Astrocyte of the cerebellum (primary cell): ENCODE measurements at regions of chr12 and their contacts with region 1.

Region 1: DNA sequence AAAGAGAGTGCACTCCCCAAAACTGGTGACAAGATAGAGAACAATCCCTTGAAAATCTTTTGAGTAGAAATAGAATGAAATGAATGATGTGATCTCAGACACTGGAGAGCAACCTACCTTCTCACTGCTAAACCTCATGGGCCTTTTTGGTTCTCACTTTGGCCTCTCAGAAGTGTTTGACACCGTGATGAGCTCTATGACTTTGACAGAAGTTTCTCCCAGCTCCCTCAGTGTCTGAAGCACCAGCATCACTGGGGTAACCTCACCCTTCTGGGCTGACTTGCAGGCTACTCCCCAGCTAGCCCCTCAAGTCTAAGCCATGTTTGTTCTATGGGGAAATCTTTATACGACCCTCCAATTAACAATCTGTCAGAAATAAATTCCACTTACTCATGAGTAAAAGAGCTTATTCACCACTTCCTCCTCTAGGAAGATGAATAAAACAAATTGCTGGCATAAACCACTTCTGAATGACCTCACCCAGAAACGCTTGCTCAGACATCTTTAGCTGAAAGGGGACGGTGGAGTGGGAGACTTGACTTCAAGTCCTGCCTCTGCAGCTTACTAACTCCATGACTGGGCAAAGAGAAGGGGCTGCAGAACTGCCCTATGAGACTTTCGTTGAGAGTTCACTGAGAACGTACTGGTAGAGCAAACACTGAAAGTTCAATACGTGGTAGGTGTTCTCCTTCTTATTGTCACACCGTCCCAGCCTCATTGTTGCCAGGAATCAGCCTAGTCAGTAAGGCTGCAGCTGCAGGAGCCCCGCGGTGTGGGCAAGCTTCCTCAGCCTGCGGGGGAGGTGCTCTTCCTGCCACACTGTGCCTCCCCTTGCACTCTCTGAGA is 46.5 kb downstream of the ST8SIA1 start:
- DNase-seq: no peak
- H3K4me3 ChIP-seq: no peak overlapping the region
- CTCF ChIP-seq: no peak

Region 2: DNA sequence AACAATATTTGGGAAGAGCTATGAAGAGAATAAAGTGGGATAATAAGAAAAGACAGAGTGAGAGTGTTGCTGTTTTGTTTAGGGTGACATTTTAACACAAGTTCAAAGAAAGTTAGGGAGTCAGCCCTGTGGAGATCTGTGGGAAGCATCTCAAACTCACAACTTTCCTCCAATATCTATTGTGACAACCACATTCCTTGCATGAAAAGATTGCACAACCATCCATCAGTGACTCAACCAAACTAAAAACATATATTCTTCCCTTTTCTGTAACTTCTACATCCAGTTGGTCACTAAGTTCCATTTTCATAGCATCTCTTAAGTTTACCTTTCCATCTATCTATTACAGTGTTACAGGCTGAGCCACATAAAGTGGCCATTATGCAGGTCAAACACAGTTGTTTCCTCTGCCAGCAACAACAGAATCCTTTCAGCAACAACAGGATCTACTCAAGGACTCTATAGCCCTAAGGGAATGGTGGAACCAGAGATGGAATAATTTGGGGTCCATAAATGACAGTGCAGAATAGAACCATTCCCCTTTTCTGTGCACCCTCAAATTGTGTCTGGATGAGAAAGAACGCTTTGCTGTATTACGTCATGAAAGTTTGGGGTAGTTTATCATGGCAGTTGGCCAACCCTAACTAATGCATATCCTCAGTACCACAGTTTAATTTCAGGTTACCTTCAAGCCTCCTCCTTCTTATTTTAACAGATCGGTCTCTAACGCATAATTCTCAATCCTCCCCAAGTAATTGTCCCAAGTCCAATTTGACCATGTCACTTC is 72.3 kb before region 1 on chr12:
- in situ Hi-C with region 1: loop called (anchors 10 kb)
- DNase-seq: no peak
- H3K4me3 ChIP-seq: no peak overlapping the region
- CTCF ChIP-seq: no peak

Region 3: DNA sequence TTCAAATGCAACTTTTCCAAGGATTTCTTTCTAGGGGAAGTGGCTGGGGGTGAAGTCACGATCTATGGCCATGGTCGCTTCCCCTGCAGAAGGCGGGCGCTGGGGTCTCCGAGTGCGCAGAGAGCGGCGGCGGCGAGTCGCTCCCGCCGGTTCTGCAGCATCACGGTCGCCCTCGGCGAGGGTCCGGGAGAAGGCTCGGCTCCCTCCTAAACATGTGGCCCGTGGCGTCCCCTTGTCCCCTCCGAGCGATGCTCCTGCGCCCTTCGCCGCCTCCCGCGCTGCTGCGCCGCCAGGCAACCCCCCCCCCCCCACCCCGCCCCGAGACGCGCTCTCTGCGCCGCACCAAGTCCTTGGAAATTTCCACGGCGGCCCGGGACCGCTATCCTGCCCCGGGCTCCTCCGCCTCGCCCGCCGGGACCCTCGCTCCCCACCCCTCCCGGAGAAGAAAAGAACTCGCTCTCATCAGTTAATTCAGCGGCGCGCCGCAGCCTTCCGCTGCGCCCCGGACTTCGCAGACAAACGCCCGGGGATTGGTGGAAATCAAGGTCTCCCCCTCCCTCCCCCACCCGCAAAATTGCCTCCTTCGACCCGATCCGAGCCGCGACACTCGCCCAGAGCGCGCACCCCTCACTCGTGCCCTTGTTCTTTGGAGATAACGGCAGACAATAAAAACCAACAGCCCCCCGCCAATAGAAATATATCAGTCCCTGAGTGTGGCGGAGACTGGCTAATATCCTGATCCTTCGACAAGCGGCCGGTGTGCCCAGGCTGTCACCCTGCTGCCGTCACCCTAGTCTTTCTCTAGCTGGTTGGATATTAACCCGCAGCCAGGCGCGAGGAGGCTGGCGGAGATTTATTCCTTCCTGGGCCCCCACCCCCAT is 46.7 kb after region 1 on chr12 and contains the start of gene ST8SIA1:
- in situ Hi-C with region 1: loop called (anchors 5 kb)
- DNase-seq: no peak
- H3K4me3 ChIP-seq: peak within 1 kb of the TSS; percentile 69
- CTCF ChIP-seq: no peak